ENCODE measurements at regions of chr12 and their contacts with region 1.

Region 1: GRCh38 chr12:111451649-111452129 is 46.0 kb downstream of the SH2B3 start:
- DNase-seq: peak in 1 of 2 experiments; percentile 61
- H3K4me3 ChIP-seq: no peak overlapping the region
- H3K4me1 ChIP-seq: no peaks in the 10 kb centered on the region
- H3K27me3 ChIP-seq: no peaks in the 10 kb centered on the region

Region 2: DNA sequence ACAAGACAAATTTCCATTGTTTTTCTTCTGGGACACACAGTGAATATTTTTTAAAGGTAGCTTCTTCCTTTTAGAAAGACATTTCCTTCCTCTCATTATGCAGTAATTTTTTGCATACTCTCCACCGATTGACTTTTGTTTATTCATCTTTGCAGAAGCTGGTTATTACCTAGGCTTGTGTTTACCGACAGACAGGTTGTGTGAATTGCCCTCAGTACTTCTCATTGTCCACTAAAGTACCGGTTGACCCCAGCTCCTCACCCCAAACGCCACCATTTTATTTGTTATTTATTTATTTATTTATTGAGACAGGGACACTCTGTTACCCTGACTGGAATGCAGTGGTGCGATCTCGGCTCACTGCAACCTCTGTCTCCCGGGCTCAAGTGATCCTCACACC is 467.9 kb before region 1 on chr12:
- in situ Hi-C with region 1: no loop called
- DNase-seq: no peak
- H3K4me3 ChIP-seq: no peak overlapping the region
- H3K4me1 ChIP-seq: no peaks in the 10 kb centered on the region
- H3K27me3 ChIP-seq: peaks cover 8% of the 10 kb centered on the region; the same call in 1 of the 2 replicates

Region 3: GRCh38 chr12:111396726-111397445 is 54.8 kb before region 1 on chr12:
- in situ Hi-C with region 1: loop called (anchors 5 kb)
- DNase-seq: peak; percentile 70 to 92
- H3K4me3 ChIP-seq: no peak overlapping the region
- H3K4me1 ChIP-seq: no peaks in the 10 kb centered on the region
- H3K27me3 ChIP-seq: no peaks in the 10 kb centered on the region